ENCODE measurements at regions of chr14 and their contacts with region 1.

Region 1: GRCh38 chr14:20327005-20327869 is 5.8 kb downstream of the CCNB1IP1 start:
- DNase-seq: peak in 4 of 5 donors; percentile 65 to 68 (median 66)
- H3K4me3 ChIP-seq: no peak overlapping the region
- H3K4me3 Mint-ChIP-seq: peak overlapping the region in 3 of 8 donors; percentile 17 to 50 (median 45)
- H3K27ac ChIP-seq: peak overlapping the region; percentile 17
- H3K27ac Mint-ChIP-seq: peak overlapping the region; percentile 24 to 92 (median 77)
- H3K4me1 ChIP-seq: peaks cover 10% of the 10 kb centered on the region
- H3K4me1 Mint-ChIP-seq: peaks cover 15 to 35% (median 22%) of the 10 kb centered on the region in 4 donors
- H3K27me3 ChIP-seq: no peaks in the 10 kb centered on the region
- H3K27me3 Mint-ChIP-seq: no peaks in the 10 kb centered on the region

Region 2: DNA sequence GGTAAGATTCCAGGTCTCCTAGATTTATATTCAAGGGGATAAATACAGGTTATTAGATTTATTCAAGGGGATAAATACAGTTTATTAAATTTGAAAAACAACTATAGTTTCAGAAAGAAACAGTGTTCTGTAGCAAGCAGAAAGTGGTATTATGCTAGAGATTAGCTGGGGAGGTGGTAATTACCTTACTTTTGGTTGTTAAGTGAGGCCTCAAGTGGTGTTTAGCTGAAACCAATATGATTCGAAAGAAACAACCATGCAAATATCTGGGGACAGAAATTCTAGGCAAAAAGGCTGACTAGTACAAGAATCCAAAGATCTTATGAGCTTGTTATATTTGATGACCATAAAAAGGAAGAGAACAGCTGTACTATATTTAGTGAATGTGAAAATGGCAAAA is 182.4 kb before region 1 on chr14:
- CTCF ChIA-PET with region 1: no interaction called
- POLR2A ChIA-PET with region 1: no interaction called
- intact Hi-C with region 1: no loop called
- DNase-seq: no peak
- H3K4me3 ChIP-seq: no peak overlapping the region
- H3K4me3 Mint-ChIP-seq: no peak overlapping the region
- H3K27ac ChIP-seq: no peak overlapping the region
- H3K27ac Mint-ChIP-seq: no peak overlapping the region
- H3K4me1 ChIP-seq: no peaks in the 10 kb centered on the region
- H3K4me1 Mint-ChIP-seq: peaks cover 0 to 2% (median 0%) of the 10 kb centered on the region in 4 donors
- H3K27me3 ChIP-seq: peaks cover 7% of the 10 kb centered on the region
- H3K27me3 Mint-ChIP-seq: peaks cover 7 to 9% of the 10 kb centered on the region in 2 donors

Region 3: DNA sequence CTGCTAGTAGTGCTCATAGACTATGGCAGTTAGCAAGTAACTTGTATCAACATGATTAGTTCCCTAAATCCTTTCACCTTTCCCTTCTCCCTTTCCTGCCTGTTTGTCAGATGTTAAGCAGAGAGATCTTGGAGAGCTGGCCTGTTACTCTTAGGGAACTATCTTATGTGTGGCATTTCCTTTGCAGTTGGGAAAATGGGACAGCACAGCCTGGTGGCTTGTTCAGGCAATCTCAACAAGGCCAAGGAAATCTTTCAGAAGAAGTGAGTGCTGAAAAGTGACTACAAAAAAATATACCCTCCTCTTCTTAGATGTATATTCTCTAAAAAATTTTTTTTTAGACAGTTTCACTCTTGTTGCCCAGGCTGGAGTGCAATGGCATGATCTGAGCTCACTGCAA is 23.6 kb after region 1 on chr14:
- CTCF ChIA-PET with region 1: interaction called, 124 read pairs
- POLR2A ChIA-PET with region 1: no interaction called
- intact Hi-C with region 1: no loop called
- DNase-seq: no peak
- H3K4me3 ChIP-seq: no peak overlapping the region
- H3K4me3 Mint-ChIP-seq: no peak overlapping the region
- H3K27ac ChIP-seq: no peak overlapping the region
- H3K27ac Mint-ChIP-seq: no peak overlapping the region
- H3K4me1 ChIP-seq: no peaks in the 10 kb centered on the region
- H3K4me1 Mint-ChIP-seq: peaks cover 0 to 5% (median 2%) of the 10 kb centered on the region in 4 donors
- H3K27me3 ChIP-seq: no peaks in the 10 kb centered on the region
- H3K27me3 Mint-ChIP-seq: no peaks in the 10 kb centered on the region

Region 4: GRCh38 chr14:20376071-20376588 is 48.9 kb after region 1 on chr14:
- CTCF ChIA-PET with region 1: interaction called, 11 read pairs
- POLR2A ChIA-PET with region 1: no interaction called
- intact Hi-C with region 1: no loop called
- DNase-seq: no peak
- H3K4me3 ChIP-seq: no peak overlapping the region
- H3K4me3 Mint-ChIP-seq: no peak overlapping the region
- H3K27ac ChIP-seq: no peak overlapping the region
- H3K27ac Mint-ChIP-seq: peak overlapping the region in 1 of 7 donors; percentile 5
- H3K4me1 ChIP-seq: no peaks in the 10 kb centered on the region
- H3K4me1 Mint-ChIP-seq: no peaks in the 10 kb centered on the region
- H3K27me3 ChIP-seq: no peaks in the 10 kb centered on the region
- H3K27me3 Mint-ChIP-seq: no peaks in the 10 kb centered on the region

Region 5: GRCh38 chr14:20461274-20462001 is 134.2 kb after region 1 on chr14 and contains the start of gene PIP4P1:
- CTCF ChIA-PET with region 1: interaction called, 16 read pairs
- POLR2A ChIA-PET with region 1: interaction called, 10 read pairs
- intact Hi-C with region 1: loop called (anchors 2 kb)
- DNase-seq: peak; percentile 98 to 100 (median 99)
- H3K4me3 ChIP-seq: peak within 1 kb of the TSS; percentile 64 to 76
- H3K4me3 Mint-ChIP-seq: peak within 1 kb of the TSS; percentile 89 to 96 (median 92)
- H3K27ac ChIP-seq: peak within 1 kb of the TSS; percentile 86
- H3K27ac Mint-ChIP-seq: peak within 1 kb of the TSS; percentile 92 to 99 (median 97)
- H3K4me1 ChIP-seq: peaks cover 39% of the 10 kb centered on the region
- H3K4me1 Mint-ChIP-seq: peaks cover 19 to 35% (median 23%) of the 10 kb centered on the region in 4 donors
- H3K27me3 ChIP-seq: no peaks in the 10 kb centered on the region
- H3K27me3 Mint-ChIP-seq: no peaks in the 10 kb centered on the region
- total RNA-seq, gene PIP4P1: 77.8 to 78.1 TPM

Region 6: GRCh38 chr14:20530771-20531571 is 203.7 kb after region 1 on chr14:
- CTCF ChIA-PET with region 1: no interaction called
- POLR2A ChIA-PET with region 1: no interaction called
- intact Hi-C with region 1: loop called (anchors 1 kb)
- DNase-seq: peak; percentile 52 to 68 (median 54)
- H3K4me3 ChIP-seq: no peak overlapping the region
- H3K4me3 Mint-ChIP-seq: peak overlapping the region in 6 of 8 donors; percentile 10 to 70 (median 60)
- H3K27ac ChIP-seq: no peak overlapping the region
- H3K27ac Mint-ChIP-seq: peak overlapping the region in 2 of 7 donors; percentile 52 to 59
- H3K4me1 ChIP-seq: no peaks in the 10 kb centered on the region
- H3K4me1 Mint-ChIP-seq: peaks cover 4 to 8% (median 7%) of the 10 kb centered on the region in 4 donors
- H3K27me3 ChIP-seq: no peaks in the 10 kb centered on the region
- H3K27me3 Mint-ChIP-seq: peaks cover 0 to 5% of the 10 kb centered on the region in 2 donors

Region 7: GRCh38 chr14:20690848-20691523 is 363.7 kb after region 1 on chr14:
- CTCF ChIA-PET with region 1: interaction called, 61 read pairs
- POLR2A ChIA-PET with region 1: interaction called, 28 read pairs
- intact Hi-C with region 1: loop called (anchors 1 kb)
- DNase-seq: peak; percentile 55 to 69 (median 65)
- H3K4me3 ChIP-seq: no peak overlapping the region
- H3K4me3 Mint-ChIP-seq: no peak overlapping the region
- H3K27ac ChIP-seq: no peak overlapping the region
- H3K27ac Mint-ChIP-seq: peak overlapping the region in 1 of 7 donors; percentile 3
- H3K4me1 ChIP-seq: no peaks in the 10 kb centered on the region
- H3K4me1 Mint-ChIP-seq: peaks cover 5 to 6% (median 6%) of the 10 kb centered on the region in 4 donors
- H3K27me3 ChIP-seq: no peaks in the 10 kb centered on the region
- H3K27me3 Mint-ChIP-seq: no peaks in the 10 kb centered on the region

Measured in CD4-positive, alpha-beta memory T cell (primary cell).